ENCODE measurements at regions of chr2 and their contacts with region 1.

Region 1: DNA sequence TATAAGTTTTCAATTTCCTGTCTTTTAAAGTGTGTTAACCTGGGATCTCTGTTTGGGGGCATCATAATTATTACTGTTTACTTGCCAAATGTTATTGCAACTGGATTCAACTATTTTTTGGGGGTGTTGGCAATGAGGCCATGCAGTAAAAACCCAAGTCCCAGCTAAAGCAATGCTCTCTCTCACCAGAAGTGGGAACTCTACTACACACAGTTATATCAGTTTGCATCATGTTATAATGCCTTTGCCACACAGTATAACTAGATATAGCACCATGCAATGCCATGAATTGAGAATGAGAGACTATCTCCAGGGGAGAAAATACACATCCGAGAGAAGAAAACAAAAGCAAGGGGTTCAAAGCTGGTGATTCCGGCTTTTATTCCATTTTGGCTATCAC is 79.0 kb downstream of the GCA start:
- DNase-seq: no peak
- H3K4me3 ChIP-seq: no peak overlapping the region
- H3K27ac ChIP-seq: no peak overlapping the region
- H3K4me1 ChIP-seq: no peaks in the 10 kb centered on the region
- H3K27me3 ChIP-seq: peaks cover 4% of the 10 kb centered on the region
- CTCF ChIP-seq: peak; percentile 22 to 47

Region 2: DNA sequence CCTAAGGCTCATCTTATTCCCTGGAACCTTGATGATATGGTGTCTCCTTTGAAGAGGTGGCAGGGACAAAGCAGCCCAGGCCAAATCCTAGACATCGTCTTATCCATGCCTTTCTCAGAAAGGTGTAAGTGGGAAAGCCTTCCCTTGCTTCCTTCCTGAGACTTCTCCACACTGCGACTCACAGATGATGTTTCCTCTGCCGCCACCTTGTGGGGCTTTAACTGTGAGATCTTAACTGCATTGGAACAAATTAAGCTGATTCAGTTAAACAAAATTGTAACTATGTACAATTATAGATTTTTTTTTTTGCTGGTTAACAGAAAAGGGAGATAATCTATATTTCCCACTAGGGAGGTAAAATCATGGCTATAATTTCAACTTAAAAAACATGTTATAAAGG is 88.9 kb before region 1 on chr2:
- CTCF ChIA-PET with region 1: no interaction called
- dilution Hi-C with region 1: no loop called
- in situ Hi-C with region 1: no loop called
- intact Hi-C with region 1: no loop called
- DNase-seq: peak; percentile 38
- H3K4me3 ChIP-seq: no peak overlapping the region
- H3K27ac ChIP-seq: no peak overlapping the region
- H3K4me1 ChIP-seq: no peaks in the 10 kb centered on the region
- H3K27me3 ChIP-seq: no peaks in the 10 kb centered on the region
- CTCF ChIP-seq: peak; percentile 43 to 48

Region 3: DNA sequence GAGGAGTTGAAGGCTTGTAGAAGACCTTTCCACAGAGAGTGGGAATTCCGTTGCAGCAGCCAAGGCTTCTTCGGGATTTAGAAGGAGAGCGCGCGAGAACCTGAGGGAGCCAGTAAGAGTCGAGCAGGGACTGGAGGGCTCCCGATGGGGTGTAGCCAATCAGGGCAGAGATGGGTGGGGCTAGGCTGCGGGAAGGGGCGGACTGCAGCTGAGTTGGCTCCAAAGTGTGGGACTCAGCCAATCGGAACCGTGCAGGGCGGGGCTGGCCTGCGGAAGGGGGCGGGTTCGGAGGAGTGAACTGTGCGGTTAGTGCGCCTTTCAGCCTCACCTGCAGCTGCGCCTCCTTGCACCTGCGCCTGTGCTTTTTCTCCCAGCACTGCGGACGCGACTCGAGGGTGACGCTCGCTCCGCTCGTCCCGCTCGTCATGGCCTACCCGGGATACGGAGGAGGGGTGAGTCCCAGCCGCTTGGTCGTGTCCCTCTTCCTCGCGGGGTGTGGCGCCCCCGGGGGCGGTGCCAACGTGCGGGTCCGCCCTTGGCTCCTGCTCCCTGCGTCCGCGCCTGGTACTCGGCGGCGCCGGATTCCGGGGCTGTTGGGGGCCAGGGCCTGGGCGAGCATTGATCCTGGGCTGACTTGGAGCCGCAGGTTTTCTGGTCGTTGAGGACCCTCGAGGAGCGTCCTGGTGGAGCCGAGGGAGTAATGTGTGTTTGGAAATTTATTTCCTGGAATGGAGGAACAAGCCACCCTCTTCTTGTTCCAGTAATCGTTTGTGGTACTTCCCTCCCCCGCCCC is 78.9 kb before region 1 on chr2 and contains the start of gene GCA:
- CTCF ChIA-PET with region 1: no interaction called
- dilution Hi-C with region 1: no loop called
- in situ Hi-C with region 1: no loop called
- intact Hi-C with region 1: no loop called
- DNase-seq: peak; percentile 96
- H3K4me3 ChIP-seq: peak within 1 kb of the TSS; percentile 75 to 85 (median 84)
- H3K27ac ChIP-seq: peak within 1 kb of the TSS; percentile 51
- H3K4me1 ChIP-seq: peaks cover 2% of the 10 kb centered on the region
- H3K27me3 ChIP-seq: no peaks in the 10 kb centered on the region
- CTCF ChIP-seq: peak in 1 of 2 donors; percentile 3
- total RNA-seq, gene GCA: 6.4 to 11.7 TPM

Region 4: GRCh38 chr2:162363361-162363760 is 59.5 kb before region 1 on chr2:
- CTCF ChIA-PET with region 1: no interaction called
- dilution Hi-C with region 1: loop called (anchors 5 kb)
- in situ Hi-C with region 1: no loop called
- intact Hi-C with region 1: no loop called
- DNase-seq: no peak
- H3K4me3 ChIP-seq: no peak overlapping the region
- H3K27ac ChIP-seq: no peak overlapping the region
- H3K4me1 ChIP-seq: no peaks in the 10 kb centered on the region
- H3K27me3 ChIP-seq: no peaks in the 10 kb centered on the region
- CTCF ChIP-seq: no peak